Dendritic cell treated with granulocyte-macrophage colony-stimulating factor and Interleukin-4, amounts not matched to agents 40 ng/mL and 50 ng/mL, for 4 days (primary cell): ENCODE measurements at regions of chr12 and their contacts with region 1.

Region 1: GRCh38 chr12:51172515-51173431 is at the start of gene TFCP2:
- H3K4me3 Mint-ChIP-seq: no peak within 1 kb of the TSS
- H3K27ac Mint-ChIP-seq: no peak within 1 kb of the TSS
- H3K4me1 Mint-ChIP-seq: peaks cover 16% of the 10 kb centered on the region
- H3K27me3 Mint-ChIP-seq: no peaks in the 10 kb centered on the region

Region 2: DNA sequence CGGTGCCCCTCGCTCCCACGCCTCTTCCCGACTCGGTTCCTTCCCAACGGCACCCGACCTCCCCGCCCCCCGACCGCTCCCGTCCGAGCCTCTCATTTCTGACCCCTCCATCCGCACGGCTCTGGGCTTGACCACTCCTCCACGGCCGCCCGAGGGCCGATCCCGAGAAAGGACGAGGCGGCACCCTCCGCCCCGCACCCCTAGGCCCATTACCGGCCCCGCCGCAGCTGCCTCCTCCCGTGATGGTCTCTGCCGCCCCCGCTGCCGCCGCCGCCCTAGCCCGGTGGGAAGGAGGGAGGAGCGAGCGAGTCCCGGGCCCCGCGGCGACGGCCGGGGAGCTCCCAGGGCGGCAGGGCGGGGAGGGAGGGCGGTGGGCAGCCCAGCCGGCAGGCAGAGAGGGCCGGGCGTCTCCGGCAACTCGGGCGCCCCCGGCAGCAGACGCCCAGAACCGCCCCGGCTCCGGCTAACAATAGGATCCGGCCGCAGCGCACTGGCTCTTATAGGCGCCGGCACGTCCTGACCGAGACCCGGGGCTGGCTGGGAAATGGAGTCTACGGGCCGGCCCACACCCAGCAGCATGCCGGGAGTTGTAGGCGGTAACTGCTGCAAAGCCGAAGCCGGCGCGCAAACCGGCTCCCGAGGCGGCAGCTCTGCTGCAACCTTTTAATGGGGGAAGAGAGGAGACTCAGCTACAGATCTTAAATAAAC is 89.5 kb before region 1 on chr12 and contains the start of gene CSRNP2:
- intact Hi-C with region 1: no loop called
- H3K4me3 Mint-ChIP-seq: peak within 1 kb of the TSS; percentile 100
- H3K27ac Mint-ChIP-seq: peak within 1 kb of the TSS; percentile 96
- H3K4me1 Mint-ChIP-seq: peaks cover 37% of the 10 kb centered on the region
- H3K27me3 Mint-ChIP-seq: no peaks in the 10 kb centered on the region

Region 3: GRCh38 chr12:51217968-51218606 is 45.3 kb after region 1 on chr12 and contains the start of gene POU6F1:
- intact Hi-C with region 1: loop called (anchors 5 kb)
- H3K4me3 Mint-ChIP-seq: peak within 1 kb of the TSS; percentile 81
- H3K27ac Mint-ChIP-seq: peak within 1 kb of the TSS; percentile 87
- H3K4me1 Mint-ChIP-seq: peaks cover 8% of the 10 kb centered on the region
- H3K27me3 Mint-ChIP-seq: peaks cover 1% of the 10 kb centered on the region

Region 4: GRCh38 chr12:51238510-51239334 is 65.9 kb after region 1 on chr12 and contains the start of gene DAZAP2:
- intact Hi-C with region 1: loop called (anchors 1 kb)
- H3K4me3 Mint-ChIP-seq: peak within 1 kb of the TSS; percentile 85
- H3K27ac Mint-ChIP-seq: peak within 1 kb of the TSS; percentile 99
- H3K4me1 Mint-ChIP-seq: peaks cover 45% of the 10 kb centered on the region
- H3K27me3 Mint-ChIP-seq: peaks cover 2% of the 10 kb centered on the region